Left ventricle myocardium inferior (tissue), 1 donor: ENCODE measurements at regions of chr7 and their contacts with region 1.

Region 1: DNA sequence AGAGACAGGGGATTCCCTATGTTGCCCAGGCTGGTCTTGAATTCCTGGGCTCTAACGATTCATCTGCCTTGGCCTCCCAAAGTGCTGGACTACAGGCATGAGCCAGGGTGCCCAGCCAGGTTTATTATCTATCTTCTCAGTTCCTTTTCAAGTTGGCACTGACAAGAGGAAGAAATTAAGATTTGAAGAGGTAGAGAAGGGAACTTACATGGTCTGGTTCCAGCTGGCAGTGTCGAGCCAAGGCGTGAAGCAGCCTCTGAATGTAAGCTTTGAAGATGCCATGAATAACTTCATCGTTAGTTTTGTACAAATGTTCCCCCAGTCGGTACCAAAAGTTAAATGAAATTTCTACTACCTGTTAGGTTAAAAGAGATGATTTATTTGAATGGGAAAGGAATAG is 57.7 kb downstream of the TNPO3 start:
- DNase-seq: no peak
- H3K4me3 ChIP-seq: no peak overlapping the region
- H3K27ac ChIP-seq: no peak overlapping the region
- H3K4me1 ChIP-seq: no peaks in the 10 kb centered on the region
- H3K27me3 ChIP-seq: no peaks in the 10 kb centered on the region
- CTCF ChIP-seq: no peak

Region 2: DNA sequence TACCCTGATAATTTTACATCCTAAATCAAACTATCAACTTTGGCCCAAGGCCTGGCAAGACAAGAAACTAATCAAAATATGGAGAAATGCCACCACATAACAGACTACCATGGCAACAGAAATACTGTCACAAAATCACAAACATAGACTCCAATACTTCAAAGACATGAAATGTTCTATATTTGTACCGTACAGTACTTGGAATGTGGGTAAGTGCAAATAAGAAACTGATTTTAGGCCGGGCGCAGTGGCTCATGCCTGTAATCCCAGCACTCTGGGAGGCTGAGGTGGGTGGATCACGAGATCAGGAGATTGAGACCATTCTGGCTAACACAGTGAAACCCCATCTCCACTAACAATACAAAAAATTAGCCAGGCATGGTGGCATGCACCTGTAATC is 48.5 kb after region 1 on chr7:
- intact Hi-C with region 1: loop called (anchors 5 kb)
- DNase-seq: no peak
- H3K4me3 ChIP-seq: no peak overlapping the region
- H3K27ac ChIP-seq: no peak overlapping the region
- H3K4me1 ChIP-seq: peaks cover 49% of the 10 kb centered on the region
- H3K27me3 ChIP-seq: no peaks in the 10 kb centered on the region
- CTCF ChIP-seq: no peak